ENCODE measurements at regions of chr2 and their contacts with region 1.

Region 1: GRCh38 chr2:53767405-53768241 is at the start of gene CHAC2:
- DNase-seq: peak; percentile 86
- ATAC-seq: peak; percentile 95
- H3K4me3 Mint-ChIP-seq: peak within 1 kb of the TSS; percentile 91
- H3K27ac Mint-ChIP-seq: peak within 1 kb of the TSS; percentile 84
- H3K4me1 Mint-ChIP-seq: peaks cover 25% of the 10 kb centered on the region
- H3K27me3 Mint-ChIP-seq: no peaks in the 10 kb centered on the region
- total RNA-seq, gene CHAC2: 5.5 to 7.3 TPM

Region 2: DNA sequence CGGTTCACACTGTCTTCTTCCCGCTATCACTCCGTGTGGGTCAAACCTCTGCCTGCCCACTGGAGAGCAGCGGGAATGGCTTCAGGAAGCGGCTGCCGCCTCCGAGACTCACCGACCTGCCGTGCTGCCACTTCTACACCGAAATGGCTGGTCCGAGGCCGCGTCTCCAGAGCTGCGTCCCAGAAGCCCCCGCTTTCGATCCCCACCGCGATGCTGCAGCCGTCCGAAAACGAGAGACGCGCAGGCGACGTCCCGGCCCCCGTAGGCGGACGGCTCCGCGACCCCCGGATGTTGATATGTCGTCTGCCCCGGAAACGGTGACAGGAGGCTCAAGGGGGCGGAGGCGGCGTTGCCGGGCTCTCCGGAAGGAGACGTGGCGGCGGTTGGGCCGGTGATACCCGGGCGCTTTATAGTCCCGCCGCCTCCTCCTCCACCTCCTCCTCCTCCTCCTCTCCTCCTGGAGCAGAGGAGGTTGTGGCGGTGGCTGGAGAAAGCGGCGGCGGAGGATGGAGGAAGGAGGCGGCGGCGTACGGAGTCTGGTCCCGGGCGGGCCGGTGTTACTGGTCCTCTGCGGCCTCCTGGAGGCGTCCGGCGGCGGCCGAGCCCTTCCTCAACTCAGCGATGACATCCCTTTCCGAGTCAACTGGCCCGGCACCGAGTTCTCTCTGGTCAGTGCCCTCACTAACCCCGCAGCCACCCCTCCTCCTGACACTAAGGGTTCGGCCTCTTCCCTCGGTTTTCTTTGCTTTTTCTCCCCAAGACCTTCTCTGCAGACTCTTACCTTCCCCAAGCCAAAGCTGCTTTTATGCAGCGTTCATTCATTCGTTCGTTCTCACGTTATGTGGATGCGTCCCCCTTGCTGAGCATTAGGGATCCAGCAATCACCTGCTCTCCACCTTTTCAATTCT is 19.3 kb after region 1 on chr2 and contains the starts of genes ASB3 and ERLEC1:
- POLR2A ChIA-PET with region 1: interaction called, 46 read pairs
- DNase-seq: peak; percentile 90
- ATAC-seq: peak; percentile 94
- H3K4me3 Mint-ChIP-seq: peak within 1 kb of the TSS; percentile 99
- H3K27ac Mint-ChIP-seq: peak within 1 kb of the TSS; percentile 94
- H3K4me1 Mint-ChIP-seq: peaks cover 24% of the 10 kb centered on the region
- H3K27me3 Mint-ChIP-seq: no peaks in the 10 kb centered on the region
- total RNA-seq, gene ASB3: 29.8 to 32.1 TPM
- total RNA-seq, gene ERLEC1: 22.2 to 22.8 TPM

Measured in activated naive CD8-positive, alpha-beta T cell treated with anti-CD3 and anti-CD28 coated beads, Interleukin-2, amount 10 ng/mL, durations not matched to agents 7 days and 5 days (primary cell).